Mucosa of descending colon (tissue), 3 donors: ENCODE measurements at regions of chr18 and their contacts with region 1.

Region 1: GRCh38 chr18:34122724-34123334 is 101.9 kb downstream of the NOL4 start:
- DNase-seq: peak in 1 of 3 donors; percentile 58
- ATAC-seq: peak; percentile 85
- H3K4me3 ChIP-seq: no peak overlapping the region
- H3K4me1 ChIP-seq: no peaks in the 10 kb centered on the region
- CTCF ChIP-seq: peak; percentile 68

Region 2: GRCh38 chr18:33839441-33840211 is 283.2 kb before region 1 on chr18:
- intact Hi-C with region 1: loop called in 1 of 2 experiments (anchors 10 kb)
- DNase-seq: peak; percentile 45 to 68 (median 53)
- ATAC-seq: peak; percentile 88
- H3K4me3 ChIP-seq: no peak overlapping the region
- H3K4me1 ChIP-seq: peaks cover 10% of the 10 kb centered on the region
- CTCF ChIP-seq: peak; percentile 65

Region 3: DNA sequence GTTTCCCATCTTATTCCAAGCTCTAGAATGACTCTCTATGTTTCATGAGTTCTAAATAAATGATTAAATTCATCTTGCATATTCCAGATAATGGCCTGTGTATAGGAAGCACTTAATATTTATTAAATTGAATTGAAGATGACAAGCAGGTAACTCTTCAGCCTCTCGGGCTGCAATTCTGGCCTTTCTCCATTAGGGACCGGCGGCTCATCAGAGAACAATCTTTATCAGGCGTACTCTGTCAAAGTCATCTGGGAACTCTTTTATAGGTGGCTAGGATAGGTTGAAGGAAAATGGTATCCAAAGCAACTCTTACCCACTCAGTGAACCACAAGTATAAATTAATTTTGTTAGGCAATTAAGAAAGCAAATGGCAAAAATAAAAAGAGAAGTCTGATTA is 206.6 kb before region 1 on chr18:
- intact Hi-C with region 1: no loop called
- DNase-seq: no peak
- ATAC-seq: no peak
- H3K4me3 ChIP-seq: no peak overlapping the region
- H3K4me1 ChIP-seq: no peaks in the 10 kb centered on the region
- CTCF ChIP-seq: no peak

Region 4: GRCh38 chr18:34077599-34077998 is 45.2 kb before region 1 on chr18:
- intact Hi-C with region 1: no loop called
- DNase-seq: no peak
- ATAC-seq: no peak
- H3K4me3 ChIP-seq: no peak overlapping the region
- H3K4me1 ChIP-seq: no peaks in the 10 kb centered on the region
- CTCF ChIP-seq: no peak

Region 5: DNA sequence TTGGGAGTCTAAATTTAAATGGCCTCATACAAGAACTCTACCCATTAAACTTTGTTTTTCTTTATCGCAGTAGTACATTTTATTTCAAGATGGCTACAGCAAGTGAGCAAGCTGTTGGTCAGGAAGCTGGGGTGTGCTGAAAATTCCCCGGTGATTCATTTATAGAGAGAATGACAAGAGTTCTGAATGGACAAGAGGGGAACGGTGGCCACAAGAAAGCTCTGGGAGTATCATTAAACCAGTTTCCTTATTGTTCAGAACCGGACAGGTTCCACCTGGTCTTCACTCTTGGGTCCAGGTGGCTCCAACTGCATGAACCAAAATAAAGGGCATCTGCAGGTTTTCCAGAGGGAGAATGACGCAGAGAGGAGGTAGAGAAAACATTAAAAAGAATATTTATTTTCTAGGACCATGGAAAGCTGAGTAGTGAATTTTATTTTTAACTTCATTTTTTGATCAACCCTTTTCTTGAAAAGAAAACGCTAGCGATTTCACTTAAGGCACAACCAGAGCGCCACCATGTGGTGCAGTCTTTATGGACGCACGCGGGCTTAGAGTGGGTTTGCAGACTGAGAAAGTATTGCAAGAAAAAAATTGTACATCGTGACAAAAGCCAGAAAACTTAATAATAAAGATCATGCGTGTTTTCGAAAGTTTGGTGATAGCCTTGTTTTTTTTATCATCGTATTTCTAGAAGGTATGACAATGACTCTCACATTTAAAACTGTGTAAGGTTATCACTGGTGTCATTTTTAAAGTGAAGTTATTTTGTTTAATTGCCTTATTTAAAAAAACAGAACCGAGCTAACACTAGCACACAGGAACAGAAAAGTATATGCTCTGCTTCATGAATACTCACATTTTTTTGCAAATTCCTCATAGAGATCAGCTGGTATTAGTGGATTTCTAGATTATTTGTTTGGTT is 199.8 kb after region 1 on chr18:
- intact Hi-C with region 1: loop called in 1 of 2 experiments (anchors 5 kb)
- DNase-seq: peak in 2 of 3 donors; percentile 70 to 90
- ATAC-seq: peak; percentile 78
- H3K4me3 ChIP-seq: no peak overlapping the region
- H3K4me1 ChIP-seq: no peaks in the 10 kb centered on the region
- CTCF ChIP-seq: no peak